ENCODE measurements at regions of chr10 and their contacts with region 1.

Region 1: GRCh38 chr10:8059959-8060703 is 5.6 kb downstream of the GATA3 start:
- DNase-seq: peak; percentile 83
- H3K4me3 Mint-ChIP-seq: peak overlapping the region; percentile 92
- H3K27ac Mint-ChIP-seq: peak overlapping the region; percentile 99
- H3K4me1 Mint-ChIP-seq: peaks cover 77% of the 10 kb centered on the region
- H3K27me3 Mint-ChIP-seq: no peaks in the 10 kb centered on the region

Region 2: DNA sequence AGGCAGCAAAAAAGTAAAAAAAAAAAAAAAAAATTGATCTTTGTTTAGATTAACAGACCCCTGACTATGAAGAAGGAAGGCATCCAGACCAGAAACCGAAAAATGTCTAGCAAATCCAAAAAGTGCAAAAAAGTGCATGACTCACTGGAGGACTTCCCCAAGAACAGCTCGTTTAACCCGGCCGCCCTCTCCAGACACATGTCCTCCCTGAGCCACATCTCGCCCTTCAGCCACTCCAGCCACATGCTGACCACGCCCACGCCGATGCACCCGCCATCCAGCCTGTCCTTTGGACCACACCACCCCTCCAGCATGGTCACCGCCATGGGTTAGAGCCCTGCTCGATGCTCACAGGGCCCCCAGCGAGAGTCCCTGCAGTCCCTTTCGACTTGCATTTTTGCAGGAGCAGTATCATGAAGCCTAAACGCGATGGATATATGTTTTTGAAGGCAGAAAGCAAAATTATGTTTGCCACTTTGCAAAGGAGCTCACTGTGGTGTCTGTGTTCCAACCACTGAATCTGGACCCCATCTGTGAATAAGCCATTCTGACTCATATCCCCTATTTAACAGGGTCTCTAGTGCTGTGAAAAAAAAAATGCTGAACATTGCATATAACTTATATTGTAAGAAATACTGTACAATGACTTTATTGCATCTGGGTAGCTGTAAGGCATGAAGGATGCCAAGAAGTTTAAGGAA is 13.7 kb after region 1 on chr10:
- CTCF ChIA-PET with region 1: interaction called, 3 read pairs
- POLR2A ChIA-PET with region 1: interaction called, 38 read pairs
- DNase-seq: no peak
- H3K4me3 Mint-ChIP-seq: no peak overlapping the region
- H3K27ac Mint-ChIP-seq: peak overlapping the region; percentile 60
- H3K4me1 Mint-ChIP-seq: peaks cover 61% of the 10 kb centered on the region
- H3K27me3 Mint-ChIP-seq: no peaks in the 10 kb centered on the region

Region 3: GRCh38 chr10:8095959-8096358 is 35.8 kb after region 1 on chr10:
- CTCF ChIA-PET with region 1: no interaction called
- POLR2A ChIA-PET with region 1: no interaction called
- DNase-seq: peak; percentile 32
- H3K4me3 Mint-ChIP-seq: no peak overlapping the region
- H3K27ac Mint-ChIP-seq: no peak overlapping the region
- H3K4me1 Mint-ChIP-seq: peaks cover 16% of the 10 kb centered on the region
- H3K27me3 Mint-ChIP-seq: no peaks in the 10 kb centered on the region

Region 4: GRCh38 chr10:8138471-8138870 is 78.3 kb after region 1 on chr10:
- CTCF ChIA-PET with region 1: interaction called, 8 read pairs
- POLR2A ChIA-PET with region 1: interaction called, 121 read pairs
- DNase-seq: no peak
- H3K4me3 Mint-ChIP-seq: peak overlapping the region; percentile 82
- H3K27ac Mint-ChIP-seq: peak overlapping the region; percentile 97
- H3K4me1 Mint-ChIP-seq: peaks cover 56% of the 10 kb centered on the region
- H3K27me3 Mint-ChIP-seq: no peaks in the 10 kb centered on the region

Region 5: GRCh38 chr10:8159341-8160165 is 99.4 kb after region 1 on chr10:
- CTCF ChIA-PET with region 1: no interaction called
- POLR2A ChIA-PET with region 1: no interaction called
- DNase-seq: no peak
- H3K4me3 Mint-ChIP-seq: no peak overlapping the region
- H3K27ac Mint-ChIP-seq: no peak overlapping the region
- H3K4me1 Mint-ChIP-seq: peaks cover 10% of the 10 kb centered on the region
- H3K27me3 Mint-ChIP-seq: peaks cover 7% of the 10 kb centered on the region

Region 6: GRCh38 chr10:8238986-8239385 is 178.9 kb after region 1 on chr10:
- CTCF ChIA-PET with region 1: no interaction called
- POLR2A ChIA-PET with region 1: interaction called, 10 read pairs
- DNase-seq: peak; percentile 63
- H3K4me3 Mint-ChIP-seq: peak overlapping the region; percentile 6
- H3K27ac Mint-ChIP-seq: peak overlapping the region; percentile 77
- H3K4me1 Mint-ChIP-seq: peaks cover 68% of the 10 kb centered on the region
- H3K27me3 Mint-ChIP-seq: no peaks in the 10 kb centered on the region

Region 7: GRCh38 chr10:8325024-8325980 is 265.2 kb after region 1 on chr10:
- CTCF ChIA-PET with region 1: no interaction called
- POLR2A ChIA-PET with region 1: interaction called, 84 read pairs
- DNase-seq: peak; percentile 35
- H3K4me3 Mint-ChIP-seq: peak overlapping the region; percentile 10
- H3K27ac Mint-ChIP-seq: peak overlapping the region; percentile 82
- H3K4me1 Mint-ChIP-seq: peaks cover 70% of the 10 kb centered on the region
- H3K27me3 Mint-ChIP-seq: no peaks in the 10 kb centered on the region

Region 8: DNA sequence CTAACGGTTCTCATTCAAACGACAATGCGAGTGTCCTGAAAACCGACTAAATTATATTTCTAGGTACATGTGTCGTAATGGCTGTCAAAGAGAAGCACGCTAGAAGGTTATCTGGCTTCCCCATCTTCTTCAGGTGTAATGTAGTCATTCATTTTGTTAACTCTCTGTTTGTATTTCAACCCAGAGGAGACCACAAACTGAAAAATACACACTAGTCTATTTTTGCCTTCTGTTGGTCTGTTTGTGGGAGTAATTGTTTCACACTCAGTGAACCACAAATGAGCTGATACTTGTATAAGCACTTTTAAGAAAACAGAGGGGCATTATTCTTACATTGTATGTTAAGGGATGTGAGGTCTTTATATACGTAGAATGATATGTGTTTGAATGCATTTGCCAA is 300.2 kb after region 1 on chr10:
- CTCF ChIA-PET with region 1: interaction called, 3 read pairs
- POLR2A ChIA-PET with region 1: interaction called, 18 read pairs
- DNase-seq: no peak
- H3K4me3 Mint-ChIP-seq: peak overlapping the region; percentile 28
- H3K27ac Mint-ChIP-seq: peak overlapping the region; percentile 88
- H3K4me1 Mint-ChIP-seq: peaks cover 72% of the 10 kb centered on the region
- H3K27me3 Mint-ChIP-seq: peaks cover 2% of the 10 kb centered on the region

Region 9: GRCh38 chr10:9018195-9019173 is 958.4 kb after region 1 on chr10:
- CTCF ChIA-PET with region 1: no interaction called
- POLR2A ChIA-PET with region 1: interaction called, 10 read pairs
- DNase-seq: no peak
- H3K4me3 Mint-ChIP-seq: peak overlapping the region; percentile 6
- H3K27ac Mint-ChIP-seq: peak overlapping the region; percentile 1
- H3K4me1 Mint-ChIP-seq: peaks cover 3% of the 10 kb centered on the region
- H3K27me3 Mint-ChIP-seq: peaks cover 8% of the 10 kb centered on the region